Activated CD8-positive, alpha-beta T cell treated with anti-CD3 and anti-CD28 coated beads for 36 hours (primary cell): ENCODE measurements at regions of chr20 and their contacts with region 1.

Region 1: GRCh38 chr20:3563548-3564177 is 92.8 kb downstream of the ATRN start:
- DNase-seq: peak; percentile 9
- ATAC-seq: peak; percentile 55
- H3K4me3 Mint-ChIP-seq: no peak overlapping the region
- H3K27ac Mint-ChIP-seq: no peak overlapping the region
- H3K4me1 Mint-ChIP-seq: no peaks in the 10 kb centered on the region
- H3K27me3 Mint-ChIP-seq: no peaks in the 10 kb centered on the region
- CTCF ChIP-seq: peak; percentile 88

Region 2: GRCh38 chr20:3204124-3204822 is 359.4 kb before region 1 on chr20 and contains the start of gene DDRGK1:
- CTCF ChIA-PET with region 1: no interaction called
- POLR2A ChIA-PET with region 1: no interaction called
- intact Hi-C with region 1: no loop called
- DNase-seq: peak; percentile 96
- ATAC-seq: peak; percentile 94
- H3K4me3 Mint-ChIP-seq: peak within 1 kb of the TSS; percentile 97
- H3K27ac Mint-ChIP-seq: peak within 1 kb of the TSS; percentile 97
- H3K4me1 Mint-ChIP-seq: peaks cover 15% of the 10 kb centered on the region
- H3K27me3 Mint-ChIP-seq: no peaks in the 10 kb centered on the region
- CTCF ChIP-seq: no peak
- total RNA-seq, gene DDRGK1: 50.1 to 54.1 TPM

Region 3: GRCh38 chr20:3551681-3552434 is 11.8 kb before region 1 on chr20:
- CTCF ChIA-PET with region 1: interaction called, 23 read pairs
- POLR2A ChIA-PET with region 1: no interaction called
- intact Hi-C with region 1: no loop called
- DNase-seq: no peak
- ATAC-seq: peak; percentile 27
- H3K4me3 Mint-ChIP-seq: no peak overlapping the region
- H3K27ac Mint-ChIP-seq: peak overlapping the region; percentile 7
- H3K4me1 Mint-ChIP-seq: peaks cover 6% of the 10 kb centered on the region
- H3K27me3 Mint-ChIP-seq: no peaks in the 10 kb centered on the region
- CTCF ChIP-seq: no peak

Region 4: GRCh38 chr20:3606021-3606420 is 42.4 kb after region 1 on chr20:
- CTCF ChIA-PET with region 1: no interaction called
- POLR2A ChIA-PET with region 1: no interaction called
- intact Hi-C with region 1: no loop called
- DNase-seq: no peak
- ATAC-seq: no peak
- H3K4me3 Mint-ChIP-seq: no peak overlapping the region
- H3K27ac Mint-ChIP-seq: peak overlapping the region; percentile 3
- H3K4me1 Mint-ChIP-seq: peaks cover 11% of the 10 kb centered on the region
- H3K27me3 Mint-ChIP-seq: no peaks in the 10 kb centered on the region
- CTCF ChIP-seq: no peak